Posterior cingulate gyrus (tissue), 11 donors: ENCODE measurements at regions of chr2 and their contacts with region 1.

Region 1: GRCh38 chr2:217988014-217988839 is 14.6 kb downstream of the TNS1 start:
- DNase-seq: peak; percentile 52 to 95 (median 85)

Region 2: DNA sequence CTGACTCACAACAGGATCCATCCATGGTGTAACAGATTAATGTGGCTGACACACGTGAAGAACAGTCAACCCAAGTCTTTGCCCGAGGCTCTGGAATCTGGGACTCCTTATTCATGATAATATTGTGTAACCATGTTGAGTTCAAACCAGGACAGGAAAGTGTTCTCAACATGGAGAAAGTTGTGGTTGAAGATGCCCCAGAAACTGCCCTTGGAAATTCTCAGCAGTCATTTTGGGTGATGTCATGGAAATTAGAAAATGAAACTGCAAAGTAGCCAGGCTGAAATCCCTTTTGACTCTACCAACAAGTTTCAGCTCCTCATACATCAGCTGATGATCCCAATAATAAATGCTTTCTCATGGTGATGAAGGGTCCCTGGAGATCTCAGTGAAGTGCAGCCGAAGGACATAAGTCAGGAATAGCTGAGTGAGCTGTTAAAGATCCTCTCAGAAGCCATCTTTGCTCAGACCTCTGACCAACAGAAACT is 293.1 kb before region 1 on chr2:
- intact Hi-C with region 1: no loop called
- DNase-seq: no peak

Region 3: GRCh38 chr2:217886720-217887309 is 101.4 kb before region 1 on chr2:
- intact Hi-C with region 1: loop called (anchors 2 kb)
- DNase-seq: peak; percentile 50 to 96 (median 83)

Region 4: GRCh38 chr2:217943446-217944389 is 44.5 kb before region 1 on chr2:
- intact Hi-C with region 1: loop called (anchors 2 kb)
- DNase-seq: peak; percentile 58 to 97 (median 78)

Region 5: DNA sequence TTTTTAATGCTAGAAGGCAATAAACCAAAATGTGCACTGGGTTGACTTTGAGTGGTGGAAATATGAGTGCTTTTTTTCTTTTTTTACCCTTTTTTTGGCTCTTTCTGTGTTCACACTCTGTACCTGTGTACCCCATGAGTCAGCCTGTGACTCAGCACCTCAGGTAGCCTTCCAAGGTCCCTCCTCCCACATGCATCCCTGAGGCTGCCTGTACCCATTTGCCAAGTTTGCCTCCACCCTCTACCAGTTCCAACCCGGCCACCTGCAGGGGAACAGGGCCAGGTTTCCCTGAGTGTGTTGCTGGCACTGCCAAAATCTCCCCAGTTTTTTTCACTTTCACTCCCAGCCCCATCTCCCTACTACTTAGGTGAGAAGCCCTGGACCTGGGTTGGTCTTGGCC is 164.5 kb after region 1 on chr2:
- intact Hi-C with region 1: no loop called
- DNase-seq: peak in 7 of 10 donors; percentile 5 to 88 (median 38)